ENCODE measurements at regions of chr16 and their contacts with region 1.

Region 1: DNA sequence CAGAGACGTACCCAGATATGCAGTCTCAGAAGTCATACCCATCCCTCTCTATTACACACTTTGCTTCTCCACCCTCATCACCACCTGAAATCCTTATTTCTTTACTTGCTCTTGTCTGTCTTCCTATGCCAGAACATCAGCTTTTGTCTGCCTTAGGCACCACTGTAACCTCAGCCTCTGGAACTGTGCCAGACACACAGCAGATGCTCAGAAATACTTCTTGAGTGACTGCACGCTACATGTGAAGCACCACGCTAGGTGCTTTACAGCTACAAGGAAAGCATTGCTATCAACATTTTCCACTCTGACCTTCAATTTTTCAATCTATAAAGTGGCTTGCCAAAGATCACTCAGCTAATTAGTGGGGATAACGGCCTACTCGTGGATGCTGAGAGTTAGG is 226.8 kb downstream of the CHD9NB start:
- DNase-seq: no peak
- ATAC-seq: no peak
- H3K4me3 ChIP-seq: no peak overlapping the region
- H3K27ac ChIP-seq: no peak overlapping the region
- H3K4me1 ChIP-seq: no peaks in the 10 kb centered on the region
- H3K27me3 ChIP-seq: no peaks in the 10 kb centered on the region
- CTCF ChIP-seq: no peak
- POLR2A ChIP-seq: no peak

Region 2: DNA sequence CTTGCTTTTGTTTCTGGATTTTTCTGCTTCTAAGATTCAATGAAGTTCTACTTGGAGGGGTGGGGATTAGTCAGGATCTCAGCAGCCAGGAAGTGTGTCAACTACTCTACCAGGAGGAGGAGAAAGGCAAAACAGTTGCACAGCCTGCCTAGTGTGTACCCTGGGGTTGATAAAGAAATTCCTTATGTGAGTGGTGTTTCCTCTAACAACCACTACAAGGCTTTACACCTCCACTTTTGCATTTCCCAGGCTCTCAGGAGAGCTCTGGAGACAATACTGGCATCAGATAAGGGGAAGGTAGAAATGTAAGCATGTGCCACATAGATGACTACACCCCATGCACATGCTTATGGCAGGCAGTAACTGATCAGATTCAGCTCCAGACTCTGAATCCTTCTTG is 453.6 kb before region 1 on chr16:
- in situ Hi-C with region 1: no loop called
- intact Hi-C with region 1: no loop called
- DNase-seq: no peak
- ATAC-seq: no peak
- H3K4me3 ChIP-seq: no peak overlapping the region
- H3K27ac ChIP-seq: no peak overlapping the region
- H3K4me1 ChIP-seq: no peaks in the 10 kb centered on the region
- H3K27me3 ChIP-seq: no peaks in the 10 kb centered on the region
- CTCF ChIP-seq: no peak
- POLR2A ChIP-seq: no peak

Region 3: DNA sequence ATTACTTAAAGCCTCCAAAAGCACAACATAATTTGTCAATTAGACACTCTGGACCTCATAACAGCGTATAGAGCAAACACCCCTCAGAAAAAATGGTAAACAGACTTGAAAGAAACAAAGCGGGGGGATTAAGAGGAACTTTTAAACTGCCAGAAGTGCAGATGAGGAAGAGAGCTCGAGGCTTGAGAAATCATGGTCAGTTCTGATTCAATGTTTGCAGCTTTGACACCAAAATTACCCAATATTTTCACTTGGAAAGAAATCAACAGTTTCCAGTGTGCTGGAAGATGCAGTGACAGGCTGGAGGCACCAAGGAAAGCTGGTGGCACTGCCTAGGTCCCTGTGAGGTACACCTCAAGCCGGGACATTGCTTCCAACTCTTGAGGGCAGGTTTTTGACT is 98.0 kb before region 1 on chr16:
- in situ Hi-C with region 1: loop called in 1 of 4 experiments (anchors 25 kb)
- intact Hi-C with region 1: no loop called
- DNase-seq: no peak
- ATAC-seq: no peak
- H3K4me3 ChIP-seq: no peak overlapping the region
- H3K27ac ChIP-seq: no peak overlapping the region
- H3K4me1 ChIP-seq: no peaks in the 10 kb centered on the region
- H3K27me3 ChIP-seq: no peaks in the 10 kb centered on the region
- CTCF ChIP-seq: no peak
- POLR2A ChIP-seq: no peak

Region 4: GRCh38 chr16:52773026-52773425 is 52.9 kb before region 1 on chr16:
- in situ Hi-C with region 1: no loop called
- intact Hi-C with region 1: no loop called
- DNase-seq: no peak
- ATAC-seq: no peak
- H3K4me3 ChIP-seq: no peak overlapping the region
- H3K27ac ChIP-seq: no peak overlapping the region
- H3K4me1 ChIP-seq: no peaks in the 10 kb centered on the region
- H3K27me3 ChIP-seq: no peaks in the 10 kb centered on the region
- CTCF ChIP-seq: no peak
- POLR2A ChIP-seq: no peak

Region 5: GRCh38 chr16:53235851-53236250 is 410.0 kb after region 1 on chr16:
- in situ Hi-C with region 1: no loop called
- intact Hi-C with region 1: no loop called
- DNase-seq: no peak
- ATAC-seq: no peak
- H3K4me3 ChIP-seq: no peak overlapping the region
- H3K27ac ChIP-seq: no peak overlapping the region
- H3K4me1 ChIP-seq: no peaks in the 10 kb centered on the region
- H3K27me3 ChIP-seq: no peaks in the 10 kb centered on the region
- CTCF ChIP-seq: no peak
- POLR2A ChIP-seq: no peak